GM12878 (cell line): ENCODE measurements at regions of chr9 and their contacts with region 1.

Region 1: GRCh38 chr9:35814841-35815543 is at the start of gene HINT2:
- DNase-seq: peak; percentile 95
- ATAC-seq: peak; percentile 92
- H3K4me3 ChIP-seq: peak within 1 kb of the TSS; percentile 79
- H3K27ac ChIP-seq: peak within 1 kb of the TSS; percentile 75
- H3K4me1 ChIP-seq: peaks cover 33% of the 10 kb centered on the region
- H3K27me3 ChIP-seq: no peaks in the 10 kb centered on the region; a peak in 1 of 4 replicates
- CTCF ChIP-seq: no peak
- EP300 ChIP-seq: no peak
- POLR2A ChIP-seq: peak; percentile 95
- RAD21 ChIP-seq: no peak
- polyA plus RNA-seq, gene HINT2: 12.1 to 32.0 TPM

Region 2: DNA sequence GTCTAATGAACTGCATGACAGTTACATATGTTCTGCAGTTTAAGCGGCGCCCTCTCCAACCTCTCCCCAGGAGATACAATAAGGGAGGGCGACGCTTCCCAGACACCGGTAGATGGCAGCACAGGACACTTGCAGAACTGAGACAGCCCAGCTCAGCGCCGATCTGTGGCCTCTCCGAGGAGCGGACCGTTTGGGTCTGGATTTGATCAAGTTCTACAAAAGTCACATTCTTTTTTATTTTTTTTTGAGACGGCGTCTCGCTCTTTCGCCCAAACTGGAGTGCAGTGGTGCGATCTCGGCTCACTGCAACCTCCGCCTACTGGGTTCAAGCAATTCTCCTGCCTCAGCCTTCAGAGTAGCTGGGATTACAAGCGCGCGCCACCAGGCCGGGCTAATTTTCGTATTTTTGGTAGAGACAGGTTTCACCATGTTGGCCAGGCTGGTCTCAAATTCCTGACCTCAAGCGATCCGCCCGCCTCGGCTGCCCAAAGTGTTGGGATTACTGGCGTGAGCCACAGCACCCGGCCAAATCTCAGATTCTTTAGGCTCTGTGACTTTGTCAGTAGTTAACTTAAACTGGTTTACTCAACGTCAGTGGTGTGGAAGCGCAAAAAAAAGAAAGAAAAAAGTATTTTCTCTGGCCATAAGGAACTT is 698.0 kb before region 1 on chr9:
- CTCF ChIA-PET with region 1: no interaction called
- POLR2A ChIA-PET with region 1: no interaction called
- RAD21 ChIA-PET with region 1: no interaction called
- SMC1A ChIA-PET with region 1: no interaction called
- in situ Hi-C with region 1: no loop called
- intact Hi-C with region 1: loop called (anchors 10 kb)
- DNase-seq: no peak
- ATAC-seq: peak; percentile 79
- H3K4me3 ChIP-seq: no peak overlapping the region
- H3K27ac ChIP-seq: no peak overlapping the region
- H3K4me1 ChIP-seq: peaks cover 24% of the 10 kb centered on the region
- H3K27me3 ChIP-seq: no peaks in the 10 kb centered on the region
- CTCF ChIP-seq: peak; percentile 93 to 98 (median 95); a peak in 5 of 6 replicates
- EP300 ChIP-seq: no peak
- POLR2A ChIP-seq: no peak
- RAD21 ChIP-seq: peak; percentile 92

Region 3: GRCh38 chr9:35229066-35229778 is 585.8 kb before region 1 on chr9:
- CTCF ChIA-PET with region 1: no interaction called
- POLR2A ChIA-PET with region 1: no interaction called
- RAD21 ChIA-PET with region 1: no interaction called
- SMC1A ChIA-PET with region 1: no interaction called
- in situ Hi-C with region 1: no loop called
- intact Hi-C with region 1: no loop called
- DNase-seq: no peak
- ATAC-seq: no peak
- H3K4me3 ChIP-seq: no peak overlapping the region
- H3K27ac ChIP-seq: no peak overlapping the region
- H3K4me1 ChIP-seq: no peaks in the 10 kb centered on the region
- H3K27me3 ChIP-seq: no peaks in the 10 kb centered on the region
- CTCF ChIP-seq: no peak
- EP300 ChIP-seq: no peak
- POLR2A ChIP-seq: no peak
- RAD21 ChIP-seq: no peak

Region 4: GRCh38 chr9:35593581-35593980 is 221.4 kb before region 1 on chr9:
- CTCF ChIA-PET with region 1: no interaction called
- POLR2A ChIA-PET with region 1: no interaction called
- RAD21 ChIA-PET with region 1: no interaction called
- SMC1A ChIA-PET with region 1: no interaction called
- in situ Hi-C with region 1: no loop called
- intact Hi-C with region 1: no loop called
- DNase-seq: no peak
- ATAC-seq: no peak
- H3K4me3 ChIP-seq: no peak overlapping the region
- H3K27ac ChIP-seq: no peak overlapping the region
- H3K4me1 ChIP-seq: no peaks in the 10 kb centered on the region
- H3K27me3 ChIP-seq: no peaks in the 10 kb centered on the region
- CTCF ChIP-seq: no peak
- EP300 ChIP-seq: no peak
- POLR2A ChIP-seq: no peak
- RAD21 ChIP-seq: no peak

Region 5: DNA sequence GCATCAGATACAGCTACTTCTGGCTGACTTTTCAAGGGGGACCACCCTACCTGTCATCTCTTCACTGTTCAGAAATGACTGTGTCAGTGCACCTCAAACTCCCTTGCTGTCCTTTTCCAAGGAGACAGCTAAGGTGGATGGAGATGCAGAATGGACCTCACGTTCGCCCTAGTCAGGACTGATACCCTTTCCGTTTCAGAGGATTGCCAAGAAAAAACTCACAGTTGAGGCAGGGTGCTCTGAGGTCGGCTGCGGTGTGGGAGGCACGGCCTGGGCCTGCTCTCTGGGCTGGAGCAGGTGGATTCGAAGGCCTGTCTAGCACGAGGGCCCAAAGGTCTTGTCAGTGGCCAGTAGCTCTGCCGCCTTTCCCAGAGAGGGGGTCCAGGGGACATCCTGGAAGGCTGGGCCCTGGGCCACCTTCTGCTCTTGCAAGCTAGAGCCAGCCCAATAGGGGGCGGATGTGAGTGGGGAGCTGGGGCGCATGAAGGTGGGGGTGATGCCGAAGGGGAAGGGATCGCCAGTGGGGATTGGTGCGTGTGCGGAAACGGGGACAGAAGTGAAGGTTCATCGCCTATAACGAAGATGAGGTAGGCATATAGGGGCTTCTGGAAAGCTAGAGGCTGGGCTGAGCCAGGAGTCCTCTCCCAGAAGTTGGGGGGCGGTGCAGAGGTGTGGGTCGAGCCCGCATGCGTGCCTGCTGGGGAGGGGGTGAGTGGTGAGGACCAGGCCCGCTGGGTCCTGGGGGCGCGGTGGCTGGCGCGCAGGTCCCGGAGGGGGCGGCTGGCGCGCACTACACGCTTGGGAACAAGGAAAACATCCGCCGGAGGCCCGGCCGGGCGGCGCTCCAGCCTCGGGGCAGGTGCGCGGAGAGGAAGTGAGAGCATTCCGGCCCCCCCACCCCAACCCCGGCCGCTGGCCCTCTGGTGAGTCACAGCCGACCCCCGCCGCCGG is 58.4 kb before region 1 on chr9:
- CTCF ChIA-PET with region 1: interaction called, 6 read pairs
- POLR2A ChIA-PET with region 1: interaction called, 7 read pairs
- RAD21 ChIA-PET with region 1: no interaction called
- SMC1A ChIA-PET with region 1: interaction called, 4 read pairs
- in situ Hi-C with region 1: no loop called
- intact Hi-C with region 1: loop called (anchors 1 kb)
- DNase-seq: no peak
- ATAC-seq: peak; percentile 86
- H3K4me3 ChIP-seq: peak overlapping the region; percentile 87
- H3K27ac ChIP-seq: peak overlapping the region; percentile 98
- H3K4me1 ChIP-seq: peaks cover 22% of the 10 kb centered on the region
- H3K27me3 ChIP-seq: no peaks in the 10 kb centered on the region
- CTCF ChIP-seq: peak; percentile 76 to 94 (median 82)
- EP300 ChIP-seq: no peak
- POLR2A ChIP-seq: no peak; the same call in none of the 2 replicates
- RAD21 ChIP-seq: peak; percentile 59

Region 6: DNA sequence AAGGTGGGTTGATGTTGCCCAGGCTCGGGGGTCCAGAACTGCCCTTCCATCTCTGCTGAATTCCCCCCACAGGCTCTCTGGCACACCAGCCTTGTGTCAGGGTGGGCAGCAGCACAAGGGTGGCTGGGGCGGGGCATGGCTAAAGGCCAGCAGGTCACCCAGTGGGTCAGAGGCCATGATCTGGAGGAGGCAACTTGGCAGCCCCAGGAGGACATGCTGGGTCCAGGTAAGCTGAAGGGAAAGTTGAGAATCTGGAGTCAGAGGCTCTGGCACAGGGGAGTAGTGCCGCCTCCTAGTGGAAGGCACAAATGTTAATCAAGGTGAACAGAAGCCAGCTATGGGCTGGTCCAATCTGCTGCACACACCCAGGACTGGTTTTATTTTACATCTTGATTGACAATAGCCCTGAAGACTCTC is 20.2 kb after region 1 on chr9:
- CTCF ChIA-PET with region 1: interaction called, 40 read pairs
- POLR2A ChIA-PET with region 1: interaction called, 3 read pairs
- RAD21 ChIA-PET with region 1: interaction called, 4 read pairs
- SMC1A ChIA-PET with region 1: interaction called, 4 read pairs
- in situ Hi-C with region 1: no loop called
- intact Hi-C with region 1: no loop called
- DNase-seq: no peak
- ATAC-seq: peak; percentile 35; the same call in 2 of the 3 replicates
- H3K4me3 ChIP-seq: no peak overlapping the region
- H3K27ac ChIP-seq: peak overlapping the region; percentile 54; the same call in 1 of the 2 replicates
- H3K4me1 ChIP-seq: peaks cover 29% of the 10 kb centered on the region
- H3K27me3 ChIP-seq: no peaks in the 10 kb centered on the region
- CTCF ChIP-seq: peak; percentile 28 to 35 (median 32); a peak in 5 of 6 replicates
- EP300 ChIP-seq: no peak
- POLR2A ChIP-seq: no peak
- RAD21 ChIP-seq: no peak

Region 7: DNA sequence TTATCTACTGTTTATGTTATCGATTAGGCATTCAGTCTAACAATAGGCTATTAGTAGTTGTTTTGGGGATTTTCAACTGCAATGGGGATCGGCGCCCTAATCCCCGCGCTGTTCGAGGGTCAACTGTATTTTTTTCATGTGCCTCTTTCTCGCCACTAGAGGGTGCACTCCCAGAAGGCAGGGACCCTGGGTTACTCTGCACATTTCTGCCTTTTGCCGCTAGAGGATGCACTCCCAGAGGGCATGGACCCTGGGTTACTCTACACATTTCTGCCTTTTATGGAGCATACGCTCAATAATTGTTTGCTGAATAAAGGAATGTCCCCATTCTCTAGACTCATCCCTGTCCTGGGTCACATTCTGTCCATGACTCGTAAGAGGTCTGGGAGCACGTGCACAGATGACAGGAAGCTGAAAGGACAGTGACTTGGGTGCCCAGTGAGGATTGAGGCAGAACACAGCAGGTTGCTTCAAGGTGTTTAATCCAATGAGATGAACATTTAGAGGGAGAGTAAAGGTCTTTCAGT is 193.8 kb after region 1 on chr9:
- CTCF ChIA-PET with region 1: no interaction called
- POLR2A ChIA-PET with region 1: no interaction called
- RAD21 ChIA-PET with region 1: no interaction called
- SMC1A ChIA-PET with region 1: no interaction called
- in situ Hi-C with region 1: no loop called
- intact Hi-C with region 1: no loop called
- DNase-seq: no peak
- ATAC-seq: peak; percentile 90
- H3K4me3 ChIP-seq: no peak overlapping the region
- H3K27ac ChIP-seq: no peak overlapping the region
- H3K4me1 ChIP-seq: peaks cover 22% of the 10 kb centered on the region
- H3K27me3 ChIP-seq: peaks cover 0 to 10% of the 10 kb centered on the region in 2 experiments; a peak in 3 of 4 replicates
- CTCF ChIP-seq: peak; percentile 70 to 83 (median 82)
- EP300 ChIP-seq: no peak
- POLR2A ChIP-seq: no peak
- RAD21 ChIP-seq: peak; percentile 54